PC-9 (cell line): ENCODE measurements at regions of chr7 and their contacts with region 1.

Region 1: GRCh38 chr7:140082770-140083169 is 20.0 kb upstream of the PARP12 start:
- DNase-seq: no peak
- H3K4me3 ChIP-seq: no peak overlapping the region
- H3K27ac ChIP-seq: no peak overlapping the region
- H3K4me1 ChIP-seq: no peaks in the 10 kb centered on the region
- H3K27me3 ChIP-seq: no peaks in the 10 kb centered on the region
- CTCF ChIP-seq: no peak

Region 2: GRCh38 chr7:139972029-139972428 is 110.7 kb before region 1 on chr7:
- CTCF ChIA-PET with region 1: no interaction called
- POLR2A ChIA-PET with region 1: no interaction called
- intact Hi-C with region 1: no loop called
- DNase-seq: no peak
- H3K4me3 ChIP-seq: no peak overlapping the region
- H3K27ac ChIP-seq: no peak overlapping the region
- H3K4me1 ChIP-seq: no peaks in the 10 kb centered on the region
- H3K27me3 ChIP-seq: peaks cover 4% of the 10 kb centered on the region; the same call in 1 of the 2 replicates
- CTCF ChIP-seq: no peak

Region 3: DNA sequence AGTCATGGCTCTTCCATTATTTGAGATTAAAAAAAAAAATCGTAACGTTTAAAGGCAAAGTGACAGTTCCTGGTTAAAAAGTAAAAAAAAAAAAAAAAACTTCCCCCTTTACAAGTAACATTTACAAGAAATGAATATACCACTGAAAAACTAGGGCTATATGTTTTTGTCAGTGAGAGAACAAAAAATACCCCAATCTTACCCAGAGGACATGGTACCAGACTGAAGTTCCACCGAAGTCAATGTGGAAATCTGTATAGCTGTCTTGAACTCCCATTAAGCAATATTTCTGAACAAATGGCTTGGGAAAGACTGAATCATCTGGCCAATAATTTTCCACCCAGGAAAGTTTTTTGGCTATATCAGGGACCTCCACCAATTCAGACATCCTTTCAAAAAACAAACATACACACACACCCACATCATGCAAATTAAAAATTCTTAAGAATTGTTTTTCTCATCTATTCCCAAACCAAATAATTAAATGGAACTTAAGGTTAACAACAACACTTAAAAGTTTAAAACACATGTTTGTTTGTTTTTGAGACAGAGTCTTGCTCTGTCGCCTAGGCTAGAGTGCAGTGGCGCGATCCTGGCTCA is 43.8 kb after region 1 on chr7:
- CTCF ChIA-PET with region 1: no interaction called
- POLR2A ChIA-PET with region 1: interaction called, 10 read pairs
- intact Hi-C with region 1: no loop called
- DNase-seq: no peak
- H3K4me3 ChIP-seq: no peak overlapping the region
- H3K27ac ChIP-seq: no peak overlapping the region
- H3K4me1 ChIP-seq: no peaks in the 10 kb centered on the region
- H3K27me3 ChIP-seq: no peaks in the 10 kb centered on the region
- CTCF ChIP-seq: no peak